IMR-90 (cell line): ENCODE measurements at regions of chr9 and their contacts with region 1.

Region 1: GRCh38 chr9:21317956-21318923 is 13.1 kb upstream of the IFNA5 start:
- DNase-seq: peak; percentile 50
- ATAC-seq: peak; percentile 91
- H3K4me3 ChIP-seq: no peak overlapping the region
- H3K27ac ChIP-seq: no peak overlapping the region
- H3K4me1 ChIP-seq: peaks cover 2% of the 10 kb centered on the region; the same call in 1 of the 2 replicates
- H3K27me3 ChIP-seq: peaks cover 6% of the 10 kb centered on the region
- CTCF ChIP-seq: peak; percentile 75
- POLR2A ChIP-seq: no peak
- RAD21 ChIP-seq: peak; percentile 56

Region 2: DNA sequence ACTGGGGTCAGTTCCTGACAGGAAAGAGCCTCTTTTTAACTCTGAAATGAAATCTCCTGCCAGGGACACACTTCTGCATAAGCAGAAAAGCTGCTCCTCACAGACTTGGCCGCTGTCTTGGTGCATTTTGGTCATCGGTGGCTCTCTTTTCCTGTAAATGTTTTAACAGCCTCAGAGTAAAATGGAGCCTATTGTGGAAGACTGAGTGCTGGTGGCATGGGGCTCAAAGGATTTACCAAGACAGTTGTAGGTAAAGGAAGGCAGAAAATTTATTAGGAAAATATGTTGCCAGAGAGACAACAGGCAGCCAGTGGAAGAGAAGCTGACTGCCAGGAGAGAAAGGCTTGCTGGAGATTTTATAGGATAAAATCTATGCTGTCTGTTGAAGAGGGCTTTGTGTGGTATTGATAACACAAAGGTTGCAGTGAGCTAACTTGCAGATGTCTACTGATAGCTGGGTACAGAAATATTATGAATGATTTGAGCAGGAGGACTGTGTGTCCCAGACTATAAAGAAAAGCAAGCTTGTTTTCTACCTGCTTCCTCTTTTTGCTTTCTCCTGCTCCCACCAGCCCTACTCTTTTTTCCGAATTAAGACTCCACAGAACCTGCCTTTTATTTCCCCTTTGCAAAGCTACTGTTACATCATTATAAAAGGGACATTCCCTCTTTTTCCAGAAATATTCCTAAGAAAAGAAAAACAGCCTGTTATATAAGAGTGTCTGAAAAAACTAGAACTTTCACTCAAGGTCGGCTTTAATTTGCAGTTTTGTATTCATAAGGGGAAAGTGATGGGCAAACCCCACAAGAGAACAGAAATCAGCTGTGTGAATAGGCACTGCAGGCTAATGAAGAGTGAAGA is 50.5 kb before region 1 on chr9:
- CTCF ChIA-PET with region 1: no interaction called
- POLR2A ChIA-PET with region 1: no interaction called
- dilution Hi-C with region 1: no loop called
- in situ Hi-C with region 1: no loop called
- intact Hi-C with region 1: no loop called
- DNase-seq: no peak
- ATAC-seq: no peak
- H3K4me3 ChIP-seq: no peak overlapping the region
- H3K27ac ChIP-seq: no peak overlapping the region
- H3K4me1 ChIP-seq: no peaks in the 10 kb centered on the region
- H3K27me3 ChIP-seq: peaks cover 1% of the 10 kb centered on the region; the same call in 1 of the 2 replicates
- CTCF ChIP-seq: no peak
- POLR2A ChIP-seq: no peak
- RAD21 ChIP-seq: no peak

Region 3: DNA sequence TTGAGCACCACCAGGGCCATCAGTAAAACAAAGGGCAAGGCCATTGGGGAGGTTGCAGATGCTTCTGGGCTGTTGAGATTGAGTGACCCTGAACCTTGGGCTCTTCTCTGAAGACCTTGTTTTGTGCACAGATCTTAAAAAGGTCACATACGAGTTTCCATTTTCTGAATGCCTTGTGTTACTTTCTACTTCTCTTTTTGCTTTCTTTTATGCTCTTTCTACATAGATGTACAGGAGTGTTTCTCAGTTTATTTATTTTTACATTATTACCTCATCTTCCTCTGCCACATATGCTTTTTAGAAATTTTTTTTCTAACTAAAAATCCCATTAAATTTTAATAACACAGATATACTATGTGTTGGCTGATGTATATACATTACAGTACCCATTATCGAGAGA is 13.0 kb before region 1 on chr9 and contains the start of gene IFNA5:
- CTCF ChIA-PET with region 1: no interaction called
- POLR2A ChIA-PET with region 1: no interaction called
- dilution Hi-C with region 1: no loop called
- in situ Hi-C with region 1: no loop called
- intact Hi-C with region 1: no loop called
- DNase-seq: no peak
- ATAC-seq: no peak
- H3K4me3 ChIP-seq: no peak within 1 kb of the TSS
- H3K27ac ChIP-seq: no peak within 1 kb of the TSS
- H3K4me1 ChIP-seq: no peaks in the 10 kb centered on the region
- H3K27me3 ChIP-seq: peaks cover 9% of the 10 kb centered on the region
- CTCF ChIP-seq: no peak
- POLR2A ChIP-seq: no peak
- RAD21 ChIP-seq: no peak
- total RNA-seq, gene IFNA5: not detected in 2 replicates

Region 4: DNA sequence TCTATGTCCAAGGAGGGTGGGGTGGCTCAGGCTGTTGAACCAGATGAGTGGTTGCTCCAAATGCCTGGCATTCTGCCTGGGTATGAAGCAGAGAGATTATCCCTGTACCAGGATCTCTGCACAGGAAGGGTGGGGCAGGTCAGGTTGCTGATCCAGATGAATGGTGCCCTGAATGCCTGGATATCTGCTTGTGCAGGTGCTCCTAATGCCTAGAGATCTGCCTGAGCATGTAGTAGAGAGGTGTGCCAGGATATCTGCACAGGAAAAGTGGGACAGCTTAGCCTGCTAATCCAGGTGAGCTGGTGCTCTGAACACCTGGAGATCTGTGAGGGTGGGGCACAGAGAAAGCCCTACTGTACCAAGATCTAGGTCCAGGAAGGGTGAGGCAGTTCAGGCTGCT is 938.8 kb after region 1 on chr9:
- CTCF ChIA-PET with region 1: no interaction called
- POLR2A ChIA-PET with region 1: no interaction called
- dilution Hi-C with region 1: no loop called
- in situ Hi-C with region 1: loop called (anchors 25 kb)
- intact Hi-C with region 1: no loop called
- DNase-seq: no peak
- ATAC-seq: no peak
- H3K4me3 ChIP-seq: no peak overlapping the region
- H3K27ac ChIP-seq: no peak overlapping the region
- H3K4me1 ChIP-seq: no peaks in the 10 kb centered on the region
- H3K27me3 ChIP-seq: peaks cover 7% of the 10 kb centered on the region
- CTCF ChIP-seq: no peak
- POLR2A ChIP-seq: no peak
- RAD21 ChIP-seq: no peak